HEK293T (cell line): ENCODE measurements at regions of chr11 and their contacts with region 1.

Region 1: GRCh38 chr11:46295312-46296058 is 18.0 kb downstream of the CREB3L1 start:
- DNase-seq: peak; percentile 93

Region 2: DNA sequence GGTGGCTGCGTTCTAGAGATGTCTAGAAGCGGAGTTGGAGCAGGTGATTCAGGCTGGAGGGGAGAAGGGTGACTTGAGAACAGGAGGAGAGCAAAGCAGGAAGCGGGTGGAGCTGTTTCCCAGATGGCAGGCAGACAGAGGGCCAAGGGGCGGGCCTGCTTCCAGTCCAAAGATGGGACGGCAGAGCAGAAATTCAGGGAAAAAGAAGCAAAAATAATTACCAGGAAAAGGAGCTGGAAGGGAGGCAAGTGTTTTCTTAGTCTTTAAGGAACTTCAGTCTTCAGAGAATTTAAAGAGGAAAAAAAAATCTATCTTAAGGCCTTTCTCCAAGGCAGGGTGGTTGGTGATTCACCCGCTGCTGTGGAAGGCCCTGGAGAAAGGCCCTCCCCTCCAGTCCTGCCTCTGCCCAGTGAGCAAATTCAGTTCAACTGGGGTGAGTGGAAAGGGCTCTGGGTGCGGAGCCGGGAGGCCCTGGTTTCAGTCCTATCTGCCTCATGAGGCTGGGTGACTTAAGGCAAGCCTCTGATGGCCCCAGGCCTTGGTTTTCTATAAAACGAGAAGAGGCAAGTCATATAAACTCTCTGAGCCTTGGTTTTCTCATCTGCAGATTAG is 22.6 kb before region 1 on chr11:
- CTCF ChIA-PET with region 1: interaction called, 20 read pairs
- POLR2A ChIA-PET with region 1: interaction called, 23 read pairs
- DNase-seq: no peak

Region 3: GRCh38 chr11:46278387-46279125 is 16.9 kb before region 1 on chr11:
- CTCF ChIA-PET with region 1: interaction called, 20 read pairs
- POLR2A ChIA-PET with region 1: interaction called, 23 read pairs
- DNase-seq: peak; percentile 70

Region 4: GRCh38 chr11:46308631-46309419 is 13.3 kb after region 1 on chr11:
- CTCF ChIA-PET with region 1: interaction called, 41 read pairs
- POLR2A ChIA-PET with region 1: interaction called, 8 read pairs
- DNase-seq: peak; percentile 76

Region 5: DNA sequence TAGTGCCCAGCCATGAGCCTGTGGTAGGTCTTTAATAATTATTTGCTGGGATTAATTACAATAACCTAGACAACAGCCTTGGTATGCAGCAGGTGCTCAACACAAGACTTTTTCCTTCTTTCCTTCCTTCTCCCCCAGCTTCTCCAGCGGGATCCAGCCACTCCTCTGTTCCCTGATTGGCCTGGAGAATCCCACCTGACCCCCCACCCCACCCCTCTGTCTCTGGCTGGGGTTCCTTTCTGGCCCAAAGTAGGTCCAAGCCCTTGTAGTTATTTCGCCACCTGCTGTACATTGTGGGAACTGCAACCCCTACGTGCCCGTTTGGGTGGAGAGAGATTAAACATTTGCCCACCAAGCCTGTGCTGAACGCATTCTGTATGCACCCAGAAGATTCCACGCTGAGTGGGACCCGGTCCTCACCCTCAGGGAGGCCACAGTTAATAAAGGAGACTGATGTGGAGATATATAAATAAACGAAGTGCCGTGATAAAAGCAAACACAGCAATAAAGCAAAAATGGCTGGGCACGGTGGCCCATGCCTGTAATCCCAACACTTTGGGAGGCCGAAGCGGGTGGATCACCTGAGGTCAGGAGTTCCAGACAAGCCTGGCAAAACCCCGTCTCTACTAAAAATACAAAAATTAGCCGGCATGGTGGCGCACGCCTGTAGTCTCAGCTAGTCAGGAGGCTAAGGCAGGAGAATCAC is 19.7 kb after region 1 on chr11:
- CTCF ChIA-PET with region 1: interaction called, 41 read pairs
- POLR2A ChIA-PET with region 1: interaction called, 8 read pairs
- DNase-seq: peak; percentile 90